Activated CD4-positive, alpha-beta memory T cell treated with anti-CD3 and anti-CD28 coated beads for 36 hours (primary cell): ENCODE measurements at regions of chr4 and their contacts with region 1.

Region 1: DNA sequence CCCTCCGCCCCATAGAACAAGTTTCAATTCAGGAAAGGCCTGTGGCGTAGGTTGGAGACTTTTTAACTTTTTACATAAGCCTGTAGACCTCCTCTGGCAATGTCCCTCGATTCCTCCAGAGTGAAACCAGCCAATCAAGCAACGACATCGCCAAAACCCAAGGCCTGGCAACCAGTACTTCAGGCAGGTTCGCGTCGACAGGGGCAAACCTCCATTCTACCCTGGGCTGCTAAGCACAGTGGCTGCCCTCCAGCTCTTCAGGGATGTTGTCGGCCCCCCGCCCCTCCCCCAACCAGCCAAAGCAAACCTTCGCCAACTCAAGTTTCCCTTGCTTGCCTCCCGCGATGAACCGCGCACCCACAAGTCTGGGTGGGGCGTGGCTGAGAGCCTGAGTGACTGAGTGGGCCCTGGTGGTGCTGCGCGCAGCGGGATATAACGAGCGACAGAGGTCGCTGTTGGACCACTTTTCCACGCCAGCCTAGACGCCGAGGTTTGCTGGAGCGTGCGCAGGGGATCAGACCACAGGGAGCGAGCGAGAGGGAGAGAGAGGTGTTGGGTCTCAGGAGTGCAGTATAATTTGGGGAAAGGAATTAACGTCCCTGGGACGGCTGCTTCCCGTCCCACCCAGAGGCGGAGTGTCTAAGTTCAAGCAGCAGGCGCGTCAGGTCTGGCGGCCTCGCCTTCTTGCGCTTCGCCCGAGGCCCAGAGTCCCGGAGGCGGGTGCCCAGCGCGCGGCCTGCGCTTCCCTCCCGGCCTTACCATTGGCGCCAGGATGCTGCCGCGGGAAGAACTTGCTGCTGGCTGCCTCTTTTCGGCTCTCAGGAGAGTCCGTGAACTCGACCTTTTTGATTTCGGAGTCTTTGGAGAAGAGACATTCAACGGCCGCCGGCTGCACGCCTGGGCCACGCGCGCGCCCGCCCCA is 9.0 kb upstream of the PITX2 start:
- DNase-seq: peak; percentile 67
- H3K4me3 Mint-ChIP-seq: no peak overlapping the region
- H3K27ac Mint-ChIP-seq: peak overlapping the region; percentile 8
- H3K4me1 Mint-ChIP-seq: peaks cover 22% of the 10 kb centered on the region
- H3K27me3 Mint-ChIP-seq: peaks cover 78% of the 10 kb centered on the region

Region 2: DNA sequence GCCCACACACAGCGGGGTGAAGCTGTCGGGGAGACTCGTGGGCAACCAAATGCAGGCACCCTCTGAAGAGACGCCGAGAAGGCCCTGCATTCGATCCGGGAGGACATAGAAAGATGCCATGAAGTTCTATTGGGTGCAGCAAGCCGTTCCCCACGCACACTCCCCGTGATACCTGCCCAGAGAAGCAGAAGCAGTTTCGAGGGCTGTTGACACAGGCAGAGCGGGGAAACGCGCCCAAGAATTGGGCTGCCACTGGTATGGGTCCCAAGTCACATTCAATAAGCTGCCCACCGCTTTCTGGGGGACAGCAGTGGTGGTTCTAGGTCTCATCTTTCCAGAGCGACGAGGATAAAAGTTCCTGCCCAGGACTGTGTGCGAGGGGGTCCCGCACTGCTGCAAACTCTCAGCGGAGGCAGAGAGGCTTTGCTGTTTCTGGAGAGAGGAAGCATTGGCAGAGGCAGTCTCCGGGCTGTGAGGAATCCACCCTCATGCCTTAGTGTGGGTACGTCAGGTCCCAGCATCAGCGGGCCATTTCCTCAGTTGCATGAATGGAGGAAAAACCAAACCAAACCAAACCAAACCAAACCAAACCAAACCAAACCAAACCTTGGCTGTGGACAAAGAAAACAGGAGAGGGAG is 19.1 kb before region 1 on chr4:
- CTCF ChIA-PET with region 1: interaction called, 3 read pairs
- POLR2A ChIA-PET with region 1: no interaction called
- intact Hi-C with region 1: loop called (anchors 2 kb)
- DNase-seq: no peak
- H3K4me3 Mint-ChIP-seq: no peak overlapping the region
- H3K27ac Mint-ChIP-seq: no peak overlapping the region
- H3K4me1 Mint-ChIP-seq: peaks cover 10% of the 10 kb centered on the region
- H3K27me3 Mint-ChIP-seq: peaks cover 84% of the 10 kb centered on the region

Region 3: DNA sequence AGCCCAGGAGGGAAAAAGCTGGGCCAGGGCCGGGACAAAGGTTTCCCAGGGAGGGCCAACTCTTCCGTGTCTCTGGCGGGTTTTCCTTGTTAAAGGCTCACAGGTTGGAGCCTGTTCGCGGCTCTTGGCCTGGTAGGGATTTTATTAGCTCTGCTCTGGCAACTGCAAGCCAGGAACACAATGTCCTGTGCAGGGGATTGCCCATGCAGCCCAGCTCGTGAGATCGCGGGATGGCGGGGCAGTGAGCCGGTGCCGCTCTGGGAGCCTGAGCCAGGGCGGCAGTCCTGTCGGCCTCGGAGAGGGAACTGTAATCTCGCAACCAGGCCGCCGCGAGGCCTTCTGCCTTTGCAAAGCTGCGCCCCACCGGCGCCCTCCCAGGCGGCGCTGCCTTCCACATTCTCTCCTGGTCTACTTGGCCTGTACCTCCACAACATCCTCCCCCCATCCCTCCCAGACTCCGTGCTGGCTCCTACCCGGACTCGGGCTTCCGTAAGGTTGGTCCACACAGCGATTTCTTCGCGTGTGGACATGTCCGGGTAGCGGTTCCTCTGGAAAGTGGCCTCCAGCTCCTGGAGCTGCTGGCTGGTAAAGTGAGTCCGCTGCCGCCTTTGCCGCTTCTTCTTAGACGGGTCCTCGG is 11.0 kb before region 1 on chr4:
- CTCF ChIA-PET with region 1: interaction called, 3 read pairs
- POLR2A ChIA-PET with region 1: no interaction called
- intact Hi-C with region 1: loop called (anchors 1 kb)
- DNase-seq: peak; percentile 40
- H3K4me3 Mint-ChIP-seq: no peak overlapping the region
- H3K27ac Mint-ChIP-seq: no peak overlapping the region
- H3K4me1 Mint-ChIP-seq: peaks cover 32% of the 10 kb centered on the region
- H3K27me3 Mint-ChIP-seq: peaks cover 92% of the 10 kb centered on the region

Region 4: DNA sequence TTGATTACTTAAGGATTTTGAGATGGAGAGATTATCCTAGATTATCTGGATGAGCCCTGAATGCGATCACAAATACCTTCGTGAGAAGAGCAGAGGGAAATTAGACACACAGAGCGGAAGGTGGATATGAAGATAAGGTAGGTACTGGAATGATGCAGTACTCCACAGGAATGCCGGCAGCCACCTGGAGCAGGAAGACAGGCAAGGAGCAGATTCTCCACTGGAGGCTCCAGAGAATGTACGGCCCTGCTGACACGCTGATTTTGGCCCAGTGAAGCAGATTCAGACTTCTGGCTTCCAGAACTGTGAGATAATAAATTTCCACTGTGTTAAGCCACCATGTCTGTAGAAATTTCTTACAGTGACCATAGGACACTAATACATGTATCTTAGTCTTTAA is 70.5 kb after region 1 on chr4:
- CTCF ChIA-PET with region 1: no interaction called
- POLR2A ChIA-PET with region 1: no interaction called
- intact Hi-C with region 1: no loop called
- DNase-seq: no peak
- H3K4me3 Mint-ChIP-seq: no peak overlapping the region
- H3K27ac Mint-ChIP-seq: no peak overlapping the region
- H3K4me1 Mint-ChIP-seq: no peaks in the 10 kb centered on the region
- H3K27me3 Mint-ChIP-seq: no peaks in the 10 kb centered on the region

Region 5: DNA sequence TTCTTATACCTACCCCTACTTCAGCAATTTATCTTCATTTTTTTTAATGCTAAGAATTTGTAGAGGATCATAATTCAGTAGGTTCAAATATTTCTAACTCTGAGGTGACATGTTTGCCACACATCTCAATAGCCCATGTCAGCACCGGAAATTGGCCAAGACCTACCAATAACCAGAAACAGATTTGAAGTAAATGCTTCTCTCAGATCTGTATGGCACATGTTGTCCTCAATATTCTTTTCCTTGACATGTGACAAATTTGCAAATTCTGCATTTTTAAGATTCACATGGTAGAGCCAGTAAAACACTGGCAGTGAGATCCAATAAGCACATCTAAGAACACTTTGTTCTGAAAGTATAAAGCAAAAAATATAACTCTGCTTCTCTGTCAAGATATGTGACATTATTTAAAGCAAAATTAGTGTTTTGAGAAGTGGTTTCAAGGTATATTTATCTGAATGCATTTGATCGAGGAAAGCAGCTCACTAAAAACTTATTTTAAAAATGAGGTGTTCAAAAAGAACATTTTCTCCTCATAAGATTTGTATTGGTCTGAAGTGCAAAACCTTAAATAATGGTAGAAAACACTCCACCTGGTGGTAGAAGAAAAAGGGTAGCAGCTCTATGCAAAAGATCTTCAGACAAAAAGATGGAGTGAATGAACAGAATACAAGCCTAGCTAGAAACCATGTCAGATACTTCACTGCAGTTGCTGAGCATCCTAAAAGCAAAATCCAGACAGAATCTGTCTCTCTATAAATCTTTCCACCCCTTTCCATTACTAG is 999.6 kb after region 1 on chr4:
- CTCF ChIA-PET with region 1: no interaction called
- POLR2A ChIA-PET with region 1: no interaction called
- intact Hi-C with region 1: loop called (anchors 5 kb)
- DNase-seq: no peak
- H3K4me3 Mint-ChIP-seq: no peak overlapping the region
- H3K27ac Mint-ChIP-seq: no peak overlapping the region
- H3K4me1 Mint-ChIP-seq: no peaks in the 10 kb centered on the region
- H3K27me3 Mint-ChIP-seq: no peaks in the 10 kb centered on the region

Region 6: GRCh38 chr4:112515304-112516067 is 1883.6 kb after region 1 on chr4:
- CTCF ChIA-PET with region 1: no interaction called
- POLR2A ChIA-PET with region 1: no interaction called
- intact Hi-C with region 1: loop called (anchors 5 kb)
- DNase-seq: peak; percentile 67
- H3K4me3 Mint-ChIP-seq: peak overlapping the region; percentile 94
- H3K27ac Mint-ChIP-seq: no peak overlapping the region
- H3K4me1 Mint-ChIP-seq: peaks cover 42% of the 10 kb centered on the region
- H3K27me3 Mint-ChIP-seq: peaks cover 85% of the 10 kb centered on the region